Left lung (tissue), 14 donors: ENCODE measurements at regions of chr12 and their contacts with region 1.

Region 1: DNA sequence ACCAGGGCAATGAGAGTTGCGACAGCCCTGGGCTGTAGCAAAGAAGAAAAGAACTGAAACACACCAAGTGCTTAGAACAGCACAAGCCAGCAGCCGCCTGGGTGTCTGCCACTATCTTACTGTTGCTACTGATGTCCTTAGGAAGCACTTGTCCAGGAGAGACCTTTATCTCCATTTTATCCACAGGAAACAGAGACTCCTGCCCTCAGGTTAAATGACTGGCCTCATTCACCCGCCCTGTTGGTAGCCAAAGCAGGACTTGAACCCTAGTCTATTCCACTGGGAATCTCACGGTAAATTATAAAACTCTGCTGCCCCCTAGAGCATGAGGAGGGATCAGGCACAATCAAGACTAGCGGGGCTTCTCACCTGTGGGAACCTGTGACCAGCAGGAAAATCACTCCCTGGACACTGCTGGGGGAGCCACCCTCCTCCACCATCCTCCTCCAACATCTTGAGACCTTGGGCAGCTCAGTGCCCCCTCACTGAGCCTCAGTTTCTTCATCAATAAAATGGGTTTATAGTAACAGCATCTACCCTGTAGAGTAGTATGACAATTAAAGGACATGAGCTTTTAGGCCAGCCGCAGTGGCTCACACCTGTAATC is 20.5 kb upstream of the TESC start:
- DNase-seq: no peak
- ATAC-seq: peak; percentile 78
- H3K4me3 ChIP-seq: no peak overlapping the region
- H3K27ac ChIP-seq: no peak overlapping the region
- H3K4me1 ChIP-seq: peaks cover 0 to 5% of the 10 kb centered on the region in 2 donors
- H3K27me3 ChIP-seq: no peaks in the 10 kb centered on the region
- CTCF ChIP-seq: peak; percentile 60 to 77

Region 2: DNA sequence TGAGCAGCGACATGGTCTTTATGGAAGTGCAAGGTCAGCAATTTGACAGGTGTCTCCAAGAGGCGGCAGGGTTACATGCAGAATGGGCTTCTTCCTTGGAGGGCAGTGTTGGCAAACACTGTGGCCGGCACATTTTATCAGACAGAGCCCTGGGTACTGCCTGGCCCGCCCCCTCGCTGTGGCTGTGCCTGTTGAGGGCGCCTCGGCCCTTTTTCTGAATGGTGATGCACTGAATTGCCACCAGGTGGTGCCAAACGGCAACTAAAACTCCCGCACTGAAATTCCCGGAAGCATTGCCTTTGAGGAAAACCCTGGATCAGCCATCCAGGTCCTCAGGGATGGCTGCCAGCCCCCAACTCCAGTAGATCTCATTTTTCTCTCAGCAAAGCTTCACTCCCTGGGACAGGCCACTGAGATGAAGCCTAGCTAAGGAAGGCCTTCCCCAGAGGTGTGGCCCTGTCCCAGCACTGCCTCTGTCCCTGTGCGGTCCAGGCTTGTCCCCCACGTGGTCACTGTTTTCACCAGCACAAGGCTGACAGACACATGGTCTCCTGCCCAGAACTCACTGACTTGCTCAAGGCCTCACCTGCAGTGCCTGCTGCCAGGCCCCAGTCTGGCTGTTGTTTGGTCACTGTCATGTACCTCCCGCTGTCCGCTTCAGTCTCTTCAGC is 94.1 kb before region 1 on chr12:
- intact Hi-C with region 1: loop called in 1 of 2 experiments (anchors 5 kb)
- DNase-seq: peak; percentile 62 to 81 (median 72)
- ATAC-seq: peak; percentile 85
- H3K4me3 ChIP-seq: no peak overlapping the region
- H3K27ac ChIP-seq: peak overlapping the region in 1 of 2 donors; percentile 14
- H3K4me1 ChIP-seq: peaks cover 4 to 9% of the 10 kb centered on the region in 2 donors
- H3K27me3 ChIP-seq: no peaks in the 10 kb centered on the region
- CTCF ChIP-seq: peak; percentile 90 to 95